OCI-LY7 (cell line): ENCODE measurements at regions of chr19 and their contacts with region 1.

Region 1: GRCh38 chr19:13784731-13785452 is 10.4 kb upstream of the ZSWIM4 start:
- DNase-seq: peak; percentile 60
- H3K4me3 ChIP-seq: no peak overlapping the region
- H3K27ac ChIP-seq: peak overlapping the region; percentile 88
- H3K4me1 ChIP-seq: peaks cover 61% of the 10 kb centered on the region
- CTCF ChIP-seq: peak; percentile 79

Region 2: DNA sequence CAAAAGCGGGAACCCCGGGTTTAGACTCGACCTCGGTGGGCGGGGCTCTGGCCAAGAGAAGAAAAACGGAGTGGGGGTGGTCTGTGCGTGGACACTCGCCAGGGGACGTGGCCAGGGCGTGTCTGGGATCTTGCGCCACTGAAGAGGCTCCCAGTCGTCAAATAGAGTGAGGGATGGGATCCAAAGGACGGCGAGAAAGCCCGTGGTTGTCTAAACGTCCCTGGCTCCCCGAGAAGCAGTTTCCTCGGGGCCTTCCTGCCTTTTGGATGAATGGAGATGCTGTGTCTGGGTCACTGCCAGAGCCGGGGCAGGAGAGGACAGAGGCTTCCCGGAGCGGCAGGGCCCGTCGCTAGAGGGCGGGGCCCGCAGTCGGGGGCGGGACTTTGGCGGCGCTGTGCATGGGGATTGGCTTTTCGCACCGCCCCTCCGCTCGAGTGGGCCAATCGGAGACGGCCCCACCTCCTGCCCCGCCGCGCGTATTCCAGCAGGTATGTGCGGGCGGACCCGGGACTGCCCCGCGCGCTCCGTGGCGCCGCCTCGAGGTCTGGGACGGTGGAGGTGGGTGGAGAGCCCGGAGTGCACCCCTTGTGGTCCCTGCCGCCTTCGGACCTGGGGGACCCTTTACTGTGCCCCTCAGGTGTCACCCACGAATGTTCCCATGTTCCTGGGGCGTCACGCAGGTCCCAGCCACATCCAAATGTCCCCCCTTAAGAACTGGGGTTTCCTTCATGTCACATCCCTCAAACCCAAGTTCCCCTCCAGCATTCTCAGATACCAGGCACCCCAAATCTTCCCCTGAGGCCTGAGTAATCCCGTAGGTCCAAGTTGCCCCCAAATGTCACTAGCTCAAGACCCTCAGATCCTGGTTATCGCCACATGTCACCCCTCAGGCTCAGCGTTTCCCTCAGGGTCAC is 48.7 kb after region 1 on chr19:
- CTCF ChIA-PET with region 1: no interaction called
- POLR2A ChIA-PET with region 1: no interaction called
- intact Hi-C with region 1: loop called (anchors 10 kb)
- DNase-seq: peak; percentile 93
- H3K4me3 ChIP-seq: peak overlapping the region; percentile 69
- H3K27ac ChIP-seq: no peak overlapping the region
- H3K4me1 ChIP-seq: peaks cover 44% of the 10 kb centered on the region
- CTCF ChIP-seq: peak; percentile 78

Region 3: GRCh38 chr19:13839130-13839937 is 54.4 kb after region 1 on chr19:
- CTCF ChIA-PET with region 1: interaction called, 11 read pairs
- POLR2A ChIA-PET with region 1: no interaction called
- intact Hi-C with region 1: loop called (anchors 10 kb)
- DNase-seq: peak; percentile 76
- H3K4me3 ChIP-seq: peak overlapping the region; percentile 65
- H3K27ac ChIP-seq: peak overlapping the region; percentile 64
- H3K4me1 ChIP-seq: peaks cover 70% of the 10 kb centered on the region
- CTCF ChIP-seq: 0 out of 2 replicates have a peak, but pooled peaks have one; percentile 24

Region 4: GRCh38 chr19:13861732-13862531 is 77.0 kb after region 1 on chr19:
- CTCF ChIA-PET with region 1: interaction called, 4 read pairs
- POLR2A ChIA-PET with region 1: interaction called, 3 read pairs
- intact Hi-C with region 1: loop called (anchors 1 kb)
- DNase-seq: peak; percentile 76
- H3K4me3 ChIP-seq: peak overlapping the region; percentile 56
- H3K27ac ChIP-seq: no peak overlapping the region
- H3K4me1 ChIP-seq: peaks cover 13% of the 10 kb centered on the region
- CTCF ChIP-seq: peak; percentile 86